ENCODE measurements at regions of chr4 and their contacts with region 1.

Region 1: DNA sequence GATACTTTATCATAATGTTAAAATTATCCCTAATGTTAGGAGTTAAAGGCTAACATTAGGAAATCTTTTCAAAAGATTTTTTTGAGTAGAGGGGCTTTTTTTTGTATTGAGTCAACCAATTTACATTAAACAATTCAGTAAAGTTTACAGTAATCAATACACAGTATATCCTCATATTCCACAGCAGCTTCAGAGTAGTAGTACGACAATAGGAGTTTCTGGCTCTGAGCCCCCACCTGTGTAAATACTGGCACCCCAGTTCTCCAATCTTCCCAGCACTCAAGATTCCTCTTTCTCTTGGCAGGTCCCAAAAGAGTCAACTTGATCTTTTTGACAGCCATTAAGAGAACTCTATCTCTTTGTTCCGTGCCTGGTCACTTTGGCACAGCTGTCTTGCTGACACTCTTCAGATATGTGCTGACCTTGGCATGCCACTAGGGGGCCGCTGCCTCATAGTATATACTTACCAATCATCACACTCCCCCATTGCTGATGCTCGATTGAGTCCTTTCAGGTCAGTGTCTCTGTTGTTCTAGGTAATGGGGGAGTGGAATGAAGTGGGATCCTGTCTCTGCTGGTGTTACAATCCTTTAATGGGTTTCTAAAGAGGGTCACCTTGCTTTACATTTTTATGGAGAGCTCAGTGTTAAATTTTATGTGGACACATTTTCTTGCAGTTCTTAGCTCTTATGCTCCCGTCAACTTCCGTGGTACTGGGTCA is 19.5 kb upstream of the CCNI start:
- DNase-seq: peak; percentile 84
- H3K4me3 ChIP-seq: no peak overlapping the region
- H3K27ac ChIP-seq: no peak overlapping the region
- H3K4me1 ChIP-seq: peaks cover 0 to 17% (median 3%) of the 10 kb centered on the region in 4 donors
- H3K27me3 ChIP-seq: no peaks in the 10 kb centered on the region
- CTCF ChIP-seq: peak in 5 of 7 experiments; percentile 55 to 87 (median 75)
- EP300 ChIP-seq: no peak
- POLR2A ChIP-seq: no peak

Region 2: DNA sequence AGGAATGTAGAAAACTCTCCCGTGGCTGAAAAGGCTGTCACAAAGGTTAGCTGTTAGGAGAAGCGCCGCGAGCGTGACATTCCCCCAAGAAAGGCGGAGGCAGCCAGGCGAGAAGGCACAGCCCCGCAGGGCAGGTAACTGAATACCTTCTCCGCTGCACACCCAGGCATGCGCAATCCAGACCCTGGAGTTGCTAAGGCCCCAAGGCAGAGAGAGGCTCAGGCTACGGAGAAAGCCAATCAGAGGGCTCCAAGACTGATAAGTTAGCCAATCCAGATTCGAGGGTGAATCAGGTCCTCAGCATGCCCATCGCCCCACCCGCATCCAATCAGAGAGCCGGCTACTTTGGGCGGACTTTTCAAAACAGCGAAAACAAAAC is 61.3 kb after region 1 on chr4:
- intact Hi-C with region 1: loop called (anchors 10 kb)
- DNase-seq: peak; percentile 95 to 99
- H3K4me3 ChIP-seq: peak overlapping the region; percentile 80 to 97 (median 94)
- H3K27ac ChIP-seq: peak overlapping the region; percentile 88 to 98 (median 95)
- H3K4me1 ChIP-seq: peaks cover 7 to 53% (median 28%) of the 10 kb centered on the region in 4 donors
- H3K27me3 ChIP-seq: no peaks in the 10 kb centered on the region
- CTCF ChIP-seq: no peak
- EP300 ChIP-seq: no peak
- POLR2A ChIP-seq: peak in 2 of 4 donors; percentile 20 to 38

Region 3: GRCh38 chr4:77203380-77204197 is 108.3 kb after region 1 on chr4:
- intact Hi-C with region 1: loop called (anchors 5 kb)
- DNase-seq: peak; percentile 61 to 91
- H3K4me3 ChIP-seq: no peak overlapping the region
- H3K27ac ChIP-seq: no peak overlapping the region
- H3K4me1 ChIP-seq: peaks cover 0 to 6% (median 0%) of the 10 kb centered on the region in 4 donors
- H3K27me3 ChIP-seq: peaks cover 0 to 6% (median 0%) of the 10 kb centered on the region in 3 donors
- CTCF ChIP-seq: peak in 5 of 7 experiments; percentile 58 to 87 (median 69)
- EP300 ChIP-seq: no peak
- POLR2A ChIP-seq: no peak